ENCODE measurements at regions of chr1 and their contacts with region 1.

Region 1: DNA sequence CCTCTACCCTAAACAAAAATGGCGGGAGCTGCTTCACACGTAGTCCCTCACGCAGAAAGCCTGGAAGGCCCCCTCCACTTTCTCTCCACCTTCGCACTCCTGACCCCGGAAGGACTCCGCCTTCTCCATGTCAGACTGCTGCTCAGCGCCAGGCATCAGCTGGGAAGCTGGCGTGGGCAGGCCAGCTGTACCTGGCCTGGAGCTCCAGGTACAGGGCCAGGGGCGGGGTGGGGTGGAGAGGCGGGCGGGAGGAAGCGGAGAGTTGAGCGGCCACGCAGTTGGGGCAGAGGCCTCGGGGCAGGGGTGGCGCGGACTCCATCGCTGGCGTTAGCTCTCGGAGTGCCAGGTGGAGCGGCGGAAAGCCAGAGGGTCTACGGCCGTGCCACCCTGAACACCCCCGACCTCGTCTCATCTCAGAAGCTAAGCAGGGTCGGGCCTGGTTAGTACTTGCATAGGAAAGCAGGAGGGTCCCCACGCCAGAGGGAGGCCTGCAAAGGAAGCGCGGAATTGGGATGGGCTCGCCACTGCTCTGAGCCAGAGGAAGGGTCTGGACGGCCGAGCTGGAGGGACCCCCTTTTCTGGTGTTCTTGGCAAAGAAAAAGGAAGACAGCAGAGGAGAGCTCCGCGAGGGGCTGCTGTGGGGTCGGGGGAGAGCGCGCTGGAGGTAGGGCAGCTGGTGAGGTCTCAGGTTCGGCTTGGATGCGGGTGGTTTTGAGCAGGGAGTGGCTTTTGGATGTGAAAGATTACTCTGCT is at the start of gene MIGA1:
- DNase-seq: peak; percentile 83
- ATAC-seq: peak; percentile 98
- H3K4me3 ChIP-seq: peak within 1 kb of the TSS; percentile 88 to 97 (median 89)
- H3K27ac ChIP-seq: peak within 1 kb of the TSS; percentile 24
- H3K4me1 ChIP-seq: peaks cover 23% of the 10 kb centered on the region
- H3K27me3 ChIP-seq: no peaks in the 10 kb centered on the region; a peak in 1 of 5 replicates
- CTCF ChIP-seq: no peak
- EP300 ChIP-seq: peak in 1 of 2 experiments; percentile 36; a peak in 1 of 4 replicates
- POLR2A ChIP-seq: peak; percentile 35 to 66; a peak in 3 of 4 replicates
- RAD21 ChIP-seq: no peak
- total RNA-seq, gene MIGA1: 6.6 and 6.7 TPM in 2 replicates

Region 2: GRCh38 chr1:77671836-77672235 is 107.9 kb before region 1 on chr1:
- CTCF ChIA-PET with region 1: no interaction called
- POLR2A ChIA-PET with region 1: no interaction called
- in situ Hi-C with region 1: no loop called
- intact Hi-C with region 1: no loop called
- DNase-seq: no peak
- ATAC-seq: no peak
- H3K4me3 ChIP-seq: no peak overlapping the region
- H3K27ac ChIP-seq: no peak overlapping the region
- H3K4me1 ChIP-seq: peaks cover 34% of the 10 kb centered on the region
- H3K27me3 ChIP-seq: no peaks in the 10 kb centered on the region
- CTCF ChIP-seq: no peak
- EP300 ChIP-seq: no peak
- POLR2A ChIP-seq: no peak
- RAD21 ChIP-seq: no peak

Region 3: DNA sequence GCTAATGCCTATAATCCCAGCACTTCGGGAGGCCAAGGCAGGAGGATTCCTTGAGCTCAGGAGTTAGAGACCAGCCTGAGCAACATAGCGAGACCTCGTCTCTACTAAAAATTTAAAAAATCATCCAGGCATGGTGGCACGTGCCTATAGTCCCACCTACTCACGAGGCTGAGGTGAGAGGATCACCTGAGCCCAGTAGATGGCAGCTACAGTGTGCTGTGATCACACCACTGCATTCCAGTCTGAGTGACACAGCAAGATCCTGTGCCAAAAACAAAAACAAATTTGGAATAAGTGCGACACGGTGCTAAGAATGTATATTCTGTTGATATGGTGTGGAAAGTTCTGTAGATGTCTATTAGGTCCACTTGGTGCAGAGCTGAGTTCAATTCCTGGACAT is 35.1 kb before region 1 on chr1:
- CTCF ChIA-PET with region 1: no interaction called
- POLR2A ChIA-PET with region 1: no interaction called
- in situ Hi-C with region 1: no loop called
- intact Hi-C with region 1: no loop called
- DNase-seq: no peak
- ATAC-seq: peak; percentile 58; the same call in 1 of the 3 replicates
- H3K4me3 ChIP-seq: no peak overlapping the region
- H3K27ac ChIP-seq: no peak overlapping the region
- H3K4me1 ChIP-seq: peaks cover 9% of the 10 kb centered on the region
- H3K27me3 ChIP-seq: no peaks in the 10 kb centered on the region
- CTCF ChIP-seq: peak; percentile 24; the same call in 1 of the 2 replicates
- EP300 ChIP-seq: no peak
- POLR2A ChIP-seq: no peak
- RAD21 ChIP-seq: no peak

Region 4: DNA sequence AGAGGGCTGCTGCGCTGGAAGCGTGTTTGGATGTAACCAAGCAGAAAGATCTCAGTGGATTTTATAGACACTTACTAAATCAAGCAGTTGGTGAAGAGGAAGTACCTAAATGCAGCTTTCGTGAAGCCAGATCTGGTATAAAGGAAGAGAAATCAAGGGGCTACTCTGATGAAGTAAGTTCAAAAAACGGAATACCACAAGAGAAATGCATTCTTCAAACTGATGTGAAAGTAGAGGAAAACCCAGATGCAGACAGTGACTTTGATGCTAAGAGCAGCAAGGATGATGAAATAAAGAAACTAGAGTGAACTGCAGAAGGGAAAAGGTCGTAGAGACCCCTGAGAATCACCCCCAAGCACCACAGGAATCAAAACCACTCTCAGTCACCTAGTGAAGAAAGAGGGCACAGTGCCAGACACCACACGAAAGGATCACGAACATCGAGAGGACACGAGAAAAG is 67.9 kb after region 1 on chr1:
- CTCF ChIA-PET with region 1: no interaction called
- POLR2A ChIA-PET with region 1: no interaction called
- in situ Hi-C with region 1: loop called (anchors 10 kb)
- intact Hi-C with region 1: no loop called
- DNase-seq: no peak
- ATAC-seq: no peak
- H3K4me3 ChIP-seq: no peak overlapping the region
- H3K27ac ChIP-seq: no peak overlapping the region
- H3K4me1 ChIP-seq: no peaks in the 10 kb centered on the region
- H3K27me3 ChIP-seq: no peaks in the 10 kb centered on the region
- CTCF ChIP-seq: no peak
- EP300 ChIP-seq: no peak
- POLR2A ChIP-seq: no peak
- RAD21 ChIP-seq: no peak

Region 5: DNA sequence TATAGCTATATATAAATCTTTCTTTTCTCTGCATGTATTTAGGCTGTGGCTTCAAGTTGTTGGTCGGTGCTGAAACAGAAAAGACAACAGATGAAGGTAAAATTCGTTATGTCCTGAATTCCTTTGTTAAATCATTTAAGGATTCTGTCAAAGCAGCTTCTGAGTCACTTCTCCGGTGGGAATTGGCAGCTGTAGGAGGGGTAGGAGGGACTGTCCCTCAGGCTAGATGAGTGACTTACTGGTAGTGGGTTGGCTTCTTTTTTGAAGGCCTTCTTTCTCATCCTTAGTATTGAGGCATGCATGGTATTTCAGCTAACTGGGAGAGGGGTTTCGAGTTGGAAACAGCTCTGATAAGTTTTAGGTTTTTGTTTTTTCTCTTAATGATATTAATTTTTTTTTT is 86.6 kb after region 1 on chr1:
- CTCF ChIA-PET with region 1: no interaction called
- POLR2A ChIA-PET with region 1: no interaction called
- in situ Hi-C with region 1: no loop called
- intact Hi-C with region 1: no loop called
- DNase-seq: no peak
- ATAC-seq: no peak
- H3K4me3 ChIP-seq: no peak overlapping the region
- H3K27ac ChIP-seq: no peak overlapping the region
- H3K4me1 ChIP-seq: no peaks in the 10 kb centered on the region
- H3K27me3 ChIP-seq: no peaks in the 10 kb centered on the region
- CTCF ChIP-seq: no peak
- EP300 ChIP-seq: no peak
- POLR2A ChIP-seq: no peak
- RAD21 ChIP-seq: no peak